RWPE1 (cell line): ENCODE measurements at regions of chr2 and their contacts with region 1.

Region 1: GRCh38 chr2:64330281-64331113 is 123.5 kb upstream of the LGALSL start:
- DNase-seq: peak; percentile 52
- H3K27ac ChIP-seq: peak overlapping the region; percentile 38; the same call in 1 of the 2 replicates
- CTCF ChIP-seq: peak; percentile 84

Region 2: DNA sequence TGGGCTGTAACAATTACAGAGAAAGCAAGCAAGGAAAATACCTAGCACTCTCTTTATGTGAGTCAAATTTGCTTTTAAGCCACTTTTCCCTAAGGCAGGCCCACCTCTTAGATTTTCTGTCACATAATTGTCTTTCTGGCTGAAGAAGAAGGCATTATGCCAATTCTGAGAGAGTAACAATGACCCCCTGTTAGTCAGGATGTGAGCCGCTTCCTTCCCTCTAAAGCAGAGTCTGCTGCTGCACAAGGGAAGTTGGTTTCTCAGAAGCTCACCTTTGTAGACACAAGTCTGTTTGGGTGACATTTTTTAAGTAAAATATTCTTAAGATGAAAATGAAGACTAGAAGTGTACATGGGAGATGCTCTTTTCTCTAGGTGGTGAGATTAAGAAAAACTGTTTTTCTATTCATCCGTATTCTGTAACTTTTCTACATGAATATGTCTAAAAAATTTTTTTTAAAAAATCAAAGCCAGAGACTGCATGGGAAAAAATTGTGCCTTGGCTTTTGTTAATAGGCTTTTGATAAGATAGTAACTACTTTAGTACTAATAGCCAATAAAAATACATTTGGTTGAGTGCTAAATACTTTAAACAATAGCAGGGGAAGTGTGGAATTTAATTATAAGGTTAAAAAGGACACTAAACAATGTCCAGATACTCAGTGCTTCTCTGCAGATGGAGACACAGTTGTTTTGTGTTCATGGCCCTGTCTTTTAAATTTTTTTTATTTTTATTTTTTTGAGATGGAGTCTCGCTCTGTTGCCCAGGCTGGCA is 277.8 kb before region 1 on chr2:
- CTCF ChIA-PET with region 1: interaction called, 64 read pairs
- POLR2A ChIA-PET with region 1: no interaction called
- DNase-seq: peak; percentile 8
- H3K27ac ChIP-seq: no peak overlapping the region
- CTCF ChIP-seq: no peak

Region 3: GRCh38 chr2:64273524-64274398 is 56.7 kb before region 1 on chr2:
- CTCF ChIA-PET with region 1: no interaction called
- POLR2A ChIA-PET with region 1: no interaction called
- DNase-seq: peak; percentile 88
- H3K27ac ChIP-seq: peak overlapping the region; percentile 90
- CTCF ChIP-seq: no peak

Region 4: GRCh38 chr2:64482765-64483504 is 152.4 kb after region 1 on chr2:
- CTCF ChIA-PET with region 1: interaction called, 61 read pairs
- POLR2A ChIA-PET with region 1: no interaction called
- DNase-seq: no peak
- H3K27ac ChIP-seq: no peak overlapping the region
- CTCF ChIP-seq: no peak

Region 5: GRCh38 chr2:64488050-64488974 is 157.8 kb after region 1 on chr2:
- CTCF ChIA-PET with region 1: interaction called, 61 read pairs
- POLR2A ChIA-PET with region 1: no interaction called
- DNase-seq: peak; percentile 69
- H3K27ac ChIP-seq: no peak overlapping the region
- CTCF ChIP-seq: peak; percentile 86

Region 6: GRCh38 chr2:64523666-64524603 is 193.4 kb after region 1 on chr2 and contains the start of gene AFTPH:
- CTCF ChIA-PET with region 1: interaction called, 14 read pairs
- POLR2A ChIA-PET with region 1: no interaction called
- DNase-seq: peak; percentile 99
- H3K27ac ChIP-seq: peak within 1 kb of the TSS; percentile 89
- CTCF ChIP-seq: no peak

Region 7: DNA sequence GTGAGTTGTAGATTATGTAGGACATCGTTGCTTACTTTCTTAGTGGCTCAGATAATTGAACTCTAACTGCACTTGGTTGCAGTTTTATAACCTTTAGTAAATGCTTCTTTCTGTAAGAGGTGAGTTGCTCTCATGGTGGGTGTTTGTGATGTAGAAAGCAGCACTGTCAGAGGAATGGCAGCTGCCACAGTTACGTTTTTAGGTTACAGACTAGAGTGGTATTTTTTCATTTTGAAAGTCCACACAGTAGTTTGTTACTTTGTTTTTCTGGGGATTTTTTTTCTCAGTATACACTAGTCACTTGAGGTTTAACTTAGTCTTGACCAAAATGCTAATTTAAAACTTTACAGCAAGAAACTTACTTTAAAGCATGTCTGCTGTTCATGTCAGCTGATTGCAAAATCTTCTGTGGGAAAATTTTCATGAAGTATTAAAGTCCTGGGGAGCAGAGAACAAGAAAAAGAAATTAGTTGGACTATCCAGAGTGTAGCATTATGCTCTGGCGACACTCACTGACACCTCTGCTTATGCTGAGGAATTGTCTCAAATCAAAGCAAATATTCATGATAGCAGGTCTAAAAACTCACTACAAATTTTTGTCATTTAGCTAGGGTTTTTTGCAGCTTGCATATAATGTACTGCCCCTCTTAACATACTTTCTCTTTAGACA is 208.4 kb after region 1 on chr2:
- CTCF ChIA-PET with region 1: no interaction called
- POLR2A ChIA-PET with region 1: no interaction called
- DNase-seq: no peak
- H3K27ac ChIP-seq: no peak overlapping the region
- CTCF ChIP-seq: no peak

Region 8: GRCh38 chr2:65666156-65666725 is 1335.7 kb after region 1 on chr2:
- CTCF ChIA-PET with region 1: no interaction called
- POLR2A ChIA-PET with region 1: no interaction called
- DNase-seq: peak; percentile 54
- H3K27ac ChIP-seq: no peak overlapping the region
- CTCF ChIP-seq: no peak